Ovary (tissue), 10 donors: ENCODE measurements at regions of chr4 and their contacts with region 1.

Region 1: GRCh38 chr4:25159884-25160713 is at the start of gene SEPSECS:
- DNase-seq: peak; percentile 98 to 99 (median 98)
- H3K4me3 ChIP-seq: peak within 1 kb of the TSS; percentile 87
- H3K27ac ChIP-seq: peak within 1 kb of the TSS; percentile 49 to 85
- H3K4me1 ChIP-seq: peaks cover 2% of the 10 kb centered on the region
- H3K27me3 ChIP-seq: no peaks in the 10 kb centered on the region
- CTCF ChIP-seq: peak in 2 of 3 donors; percentile 20 to 30
- EP300 ChIP-seq: no peak
- POLR2A ChIP-seq: peak; percentile 57
- total RNA-seq, gene SEPSECS: 4.0 to 11.0 (median 8.8) TPM

Region 2: DNA sequence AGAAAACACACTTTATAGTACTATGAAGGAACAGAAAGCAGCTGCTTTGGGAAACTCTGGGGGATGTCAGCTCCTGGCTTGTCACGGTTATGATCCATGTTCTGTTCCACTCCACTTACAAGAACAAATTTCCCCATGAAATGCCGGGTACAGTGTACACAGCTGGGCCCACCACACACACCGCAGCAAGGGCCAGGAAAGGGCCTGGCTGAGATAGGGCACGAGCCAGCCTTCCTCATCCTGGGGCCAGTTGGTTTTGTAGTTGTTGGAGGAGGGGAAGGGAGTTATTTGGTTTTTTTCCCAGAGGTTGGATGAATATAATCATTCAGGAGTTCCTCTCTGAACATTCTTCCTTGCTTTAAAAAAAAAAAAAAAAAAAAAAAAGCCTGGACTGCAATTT is 56.7 kb before region 1 on chr4:
- intact Hi-C with region 1: loop called in 1 of 4 experiments (anchors 10 kb)
- DNase-seq: peak; percentile 43 to 74 (median 59)
- H3K4me3 ChIP-seq: no peak overlapping the region
- H3K27ac ChIP-seq: peak overlapping the region; percentile 4 to 59
- H3K4me1 ChIP-seq: peaks cover 11% of the 10 kb centered on the region
- H3K27me3 ChIP-seq: no peaks in the 10 kb centered on the region
- CTCF ChIP-seq: no peak
- EP300 ChIP-seq: no peak
- POLR2A ChIP-seq: no peak

Region 3: GRCh38 chr4:25234390-25235370 is 74.6 kb after region 1 on chr4:
- intact Hi-C with region 1: loop called in 1 of 4 experiments (anchors 10 kb)
- DNase-seq: peak; percentile 45 to 69 (median 61)
- H3K4me3 ChIP-seq: peak overlapping the region; percentile 73
- H3K27ac ChIP-seq: peak overlapping the region; percentile 93 to 98
- H3K4me1 ChIP-seq: peaks cover 1% of the 10 kb centered on the region
- H3K27me3 ChIP-seq: no peaks in the 10 kb centered on the region
- CTCF ChIP-seq: peak in 2 of 3 donors; percentile 57 to 65
- EP300 ChIP-seq: no peak
- POLR2A ChIP-seq: no peak

Region 4: GRCh38 chr4:25376754-25377571 is 216.9 kb after region 1 on chr4 and contains the start of gene ANAPC4:
- intact Hi-C with region 1: loop called in 1 of 4 experiments (anchors 10 kb)
- DNase-seq: peak; percentile 91 to 97 (median 95)
- H3K4me3 ChIP-seq: peak within 1 kb of the TSS; percentile 57
- H3K27ac ChIP-seq: peak within 1 kb of the TSS; percentile 62 to 73
- H3K4me1 ChIP-seq: peaks cover 3% of the 10 kb centered on the region
- H3K27me3 ChIP-seq: no peaks in the 10 kb centered on the region
- CTCF ChIP-seq: peak in 1 of 3 donors; percentile 13
- EP300 ChIP-seq: no peak
- POLR2A ChIP-seq: peak; percentile 45
- total RNA-seq, gene ANAPC4: 27.6 to 106 (median 34.8) TPM